CD4-positive, alpha-beta memory T cell (primary cell): ENCODE measurements at regions of chr5 and their contacts with region 1.

Region 1: DNA sequence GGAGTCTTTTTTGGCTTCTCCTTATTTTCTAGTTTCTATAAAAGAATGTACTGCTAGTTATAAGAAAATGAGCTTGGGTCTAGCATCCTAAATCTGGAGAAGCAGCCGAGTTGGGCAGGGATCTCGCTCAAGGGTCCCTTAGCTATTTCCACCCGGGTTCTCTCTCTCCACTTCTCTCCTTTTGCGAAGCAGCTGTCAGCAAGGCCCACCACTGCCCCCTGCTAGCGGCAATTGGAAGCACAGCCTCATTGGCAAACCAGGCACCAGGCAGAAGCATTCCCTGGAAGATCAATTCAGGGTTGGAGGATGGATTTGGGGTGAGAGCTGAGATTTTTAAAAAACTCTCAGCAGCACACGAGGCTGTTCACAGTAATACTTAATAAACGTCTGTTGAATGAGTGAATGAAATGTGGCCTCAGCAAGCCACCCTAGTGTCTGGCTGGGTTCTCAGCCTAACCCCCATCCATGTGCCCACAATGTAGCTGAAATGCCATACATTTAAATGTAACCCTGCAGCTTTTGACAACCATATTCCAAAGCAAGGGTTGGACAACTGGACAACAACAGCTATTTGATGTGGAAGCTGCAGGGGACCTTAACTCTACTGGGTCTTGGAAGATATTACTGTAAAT is 34.6 kb upstream of the TNIP1 start:
- DNase-seq: peak; percentile 62 to 73 (median 65)
- H3K4me3 ChIP-seq: no peak overlapping the region
- H3K4me3 Mint-ChIP-seq: no peak overlapping the region
- H3K27ac ChIP-seq: peak overlapping the region; percentile 8
- H3K27ac Mint-ChIP-seq: peak overlapping the region in 2 of 7 donors; percentile 36 to 60
- H3K4me1 ChIP-seq: peaks cover 11% of the 10 kb centered on the region
- H3K4me1 Mint-ChIP-seq: peaks cover 0 to 13% (median 7%) of the 10 kb centered on the region in 4 donors
- H3K27me3 ChIP-seq: no peaks in the 10 kb centered on the region
- H3K27me3 Mint-ChIP-seq: no peaks in the 10 kb centered on the region

Region 2: GRCh38 chr5:150801117-150801927 is 314.1 kb before region 1 on chr5:
- CTCF ChIA-PET with region 1: interaction called, 3 read pairs
- POLR2A ChIA-PET with region 1: no interaction called
- intact Hi-C with region 1: loop called (anchors 1 kb)
- DNase-seq: peak in 4 of 5 donors; percentile 42 to 50 (median 44)
- H3K4me3 ChIP-seq: no peak overlapping the region
- H3K4me3 Mint-ChIP-seq: no peak overlapping the region
- H3K27ac ChIP-seq: no peak overlapping the region
- H3K27ac Mint-ChIP-seq: peak overlapping the region in 2 of 7 donors; percentile 37 to 55
- H3K4me1 ChIP-seq: peaks cover 8% of the 10 kb centered on the region
- H3K4me1 Mint-ChIP-seq: peaks cover 3 to 5% (median 5%) of the 10 kb centered on the region in 4 donors
- H3K27me3 ChIP-seq: no peaks in the 10 kb centered on the region
- H3K27me3 Mint-ChIP-seq: peaks cover 3 to 6% of the 10 kb centered on the region in 2 donors

Region 3: GRCh38 chr5:151040211-151040747 is 75.1 kb before region 1 on chr5:
- CTCF ChIA-PET with region 1: interaction called, 25 read pairs
- POLR2A ChIA-PET with region 1: no interaction called
- intact Hi-C with region 1: no loop called
- DNase-seq: no peak
- H3K4me3 ChIP-seq: no peak overlapping the region
- H3K4me3 Mint-ChIP-seq: no peak overlapping the region
- H3K27ac ChIP-seq: no peak overlapping the region
- H3K27ac Mint-ChIP-seq: peak overlapping the region in 1 of 7 donors; percentile 57
- H3K4me1 ChIP-seq: no peaks in the 10 kb centered on the region
- H3K4me1 Mint-ChIP-seq: no peaks in the 10 kb centered on the region
- H3K27me3 ChIP-seq: no peaks in the 10 kb centered on the region
- H3K27me3 Mint-ChIP-seq: no peaks in the 10 kb centered on the region

Region 4: DNA sequence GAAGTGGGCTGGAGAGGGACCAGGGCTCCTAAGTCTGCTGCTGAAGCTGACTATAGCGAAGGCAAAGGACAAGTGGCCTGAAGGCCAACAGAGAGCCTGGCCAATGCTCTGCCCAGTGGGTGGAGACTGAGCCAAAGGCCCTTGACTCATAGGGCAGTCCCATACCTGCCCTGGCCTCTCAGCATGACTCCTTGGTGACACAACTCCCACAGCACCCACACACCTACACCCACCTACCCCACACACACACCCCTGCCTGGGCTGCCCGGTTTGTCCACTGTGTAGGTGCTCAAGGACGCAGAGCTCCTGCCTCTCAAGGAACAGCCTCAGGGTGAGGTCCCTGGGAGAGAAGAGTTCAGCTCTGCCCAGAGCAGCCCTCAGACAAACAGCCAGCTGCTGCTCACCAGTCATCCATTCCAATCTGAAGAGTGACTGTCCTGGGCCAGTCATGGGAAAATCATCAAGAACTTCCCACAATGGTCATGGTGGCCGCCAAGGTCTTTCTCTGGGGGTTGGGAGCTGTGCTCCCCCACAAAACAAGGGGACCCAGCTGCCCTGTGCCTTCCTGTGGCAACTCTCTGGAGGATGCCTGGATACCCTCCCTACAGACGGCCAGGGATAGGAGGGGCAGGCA is 39.6 kb before region 1 on chr5:
- CTCF ChIA-PET with region 1: interaction called, 80 read pairs
- POLR2A ChIA-PET with region 1: interaction called, 28 read pairs
- intact Hi-C with region 1: loop called (anchors 1 kb)
- DNase-seq: no peak
- H3K4me3 ChIP-seq: no peak overlapping the region
- H3K4me3 Mint-ChIP-seq: peak overlapping the region in 6 of 8 donors; percentile 20 to 98 (median 76)
- H3K27ac ChIP-seq: peak overlapping the region; percentile 1
- H3K27ac Mint-ChIP-seq: peak overlapping the region; percentile 73 to 89 (median 76)
- H3K4me1 ChIP-seq: peaks cover 81% of the 10 kb centered on the region
- H3K4me1 Mint-ChIP-seq: peaks cover 59 to 82% (median 70%) of the 10 kb centered on the region in 4 donors
- H3K27me3 ChIP-seq: no peaks in the 10 kb centered on the region
- H3K27me3 Mint-ChIP-seq: no peaks in the 10 kb centered on the region

Region 5: DNA sequence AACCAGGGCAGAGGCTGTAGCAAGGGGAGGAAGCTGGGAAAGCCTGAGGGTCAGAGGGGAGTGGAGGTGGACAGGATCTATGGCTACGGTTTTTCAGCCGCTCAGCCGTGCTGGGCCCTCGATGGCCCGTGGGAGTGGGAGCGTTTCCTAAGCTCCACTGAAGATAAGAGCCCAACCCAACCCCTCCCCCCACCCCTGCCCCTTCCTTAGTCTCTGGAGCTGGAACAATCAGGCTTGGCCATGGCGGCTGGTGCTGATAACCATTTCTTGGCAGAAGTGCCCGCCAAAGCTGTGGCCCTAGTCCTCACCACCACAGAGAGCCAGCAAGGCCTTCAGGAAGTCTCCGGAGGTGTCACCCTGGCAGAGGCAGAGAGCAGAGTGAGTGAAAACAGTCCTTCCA is 14.2 kb before region 1 on chr5:
- CTCF ChIA-PET with region 1: interaction called, 31 read pairs
- POLR2A ChIA-PET with region 1: interaction called, 5 read pairs
- intact Hi-C with region 1: no loop called
- DNase-seq: no peak
- H3K4me3 ChIP-seq: no peak overlapping the region
- H3K4me3 Mint-ChIP-seq: no peak overlapping the region
- H3K27ac ChIP-seq: no peak overlapping the region
- H3K27ac Mint-ChIP-seq: peak overlapping the region in 4 of 7 donors; percentile 48 to 82 (median 78)
- H3K4me1 ChIP-seq: peaks cover 25% of the 10 kb centered on the region
- H3K4me1 Mint-ChIP-seq: peaks cover 27 to 51% (median 39%) of the 10 kb centered on the region in 4 donors
- H3K27me3 ChIP-seq: no peaks in the 10 kb centered on the region
- H3K27me3 Mint-ChIP-seq: no peaks in the 10 kb centered on the region

Region 6: DNA sequence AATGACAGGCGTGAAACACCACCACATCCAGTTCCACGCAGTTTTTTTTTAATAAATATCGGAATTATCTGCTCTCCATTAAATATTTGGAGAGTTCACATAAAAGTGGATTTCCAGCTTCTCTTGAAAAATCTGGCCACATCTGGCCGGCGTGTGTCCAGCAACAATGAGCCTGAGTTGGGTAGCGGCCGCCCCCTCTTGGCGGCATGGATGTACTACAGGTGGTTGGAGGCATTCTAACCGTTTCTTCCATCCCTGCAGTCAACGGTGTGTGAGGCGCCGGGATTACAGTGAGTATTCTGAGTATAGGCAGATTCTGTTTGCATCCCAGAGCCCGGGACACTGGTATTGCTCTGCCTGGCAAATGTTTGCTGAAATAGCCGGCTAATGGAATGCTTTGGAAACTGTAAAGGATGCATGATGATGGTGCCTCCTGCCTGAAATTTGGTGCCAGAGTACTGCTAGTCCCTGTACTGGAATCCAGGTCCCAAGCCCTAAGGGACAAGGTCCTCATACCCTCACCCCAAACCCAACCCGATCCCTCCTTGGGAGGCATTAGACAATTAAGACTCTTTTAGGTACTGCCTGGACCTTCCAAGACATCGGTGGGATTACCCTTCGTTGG is 124.0 kb after region 1 on chr5:
- CTCF ChIA-PET with region 1: interaction called, 37 read pairs
- POLR2A ChIA-PET with region 1: no interaction called
- intact Hi-C with region 1: no loop called
- DNase-seq: peak in 4 of 5 donors; percentile 40 to 60 (median 48)
- H3K4me3 ChIP-seq: no peak overlapping the region
- H3K4me3 Mint-ChIP-seq: no peak overlapping the region
- H3K27ac ChIP-seq: no peak overlapping the region
- H3K27ac Mint-ChIP-seq: peak overlapping the region in 3 of 7 donors; percentile 35 to 81 (median 61)
- H3K4me1 ChIP-seq: peaks cover 28% of the 10 kb centered on the region
- H3K4me1 Mint-ChIP-seq: peaks cover 17 to 24% (median 18%) of the 10 kb centered on the region in 4 donors
- H3K27me3 ChIP-seq: no peaks in the 10 kb centered on the region
- H3K27me3 Mint-ChIP-seq: no peaks in the 10 kb centered on the region